HepG2 (cell line): ENCODE measurements at regions of chr20 and their contacts with region 1.

Region 1: GRCh38 chr20:49006446-49006980 is 39.6 kb upstream of the CSE1L start:
- DNase-seq: no peak
- ATAC-seq: no peak
- H3K4me3 ChIP-seq: no peak overlapping the region
- H3K27ac ChIP-seq: peak overlapping the region; percentile 16
- H3K4me1 ChIP-seq: peaks cover 46% of the 10 kb centered on the region
- H3K27me3 ChIP-seq: no peaks in the 10 kb centered on the region
- CTCF ChIP-seq: no peak
- EP300 ChIP-seq: no peak
- POLR2A ChIP-seq: no peak
- RAD21 ChIP-seq: no peak

Region 2: GRCh38 chr20:49028684-49029083 is 22.2 kb after region 1 on chr20:
- CTCF ChIA-PET with region 1: no interaction called
- POLR2A ChIA-PET with region 1: no interaction called
- in situ Hi-C with region 1: no loop called
- intact Hi-C with region 1: no loop called
- DNase-seq: peak; percentile 58
- ATAC-seq: peak; percentile 84
- H3K4me3 ChIP-seq: no peak overlapping the region
- H3K27ac ChIP-seq: no peak overlapping the region
- H3K4me1 ChIP-seq: no peaks in the 10 kb centered on the region
- H3K27me3 ChIP-seq: no peaks in the 10 kb centered on the region
- CTCF ChIP-seq: peak; percentile 58
- EP300 ChIP-seq: no peak
- POLR2A ChIP-seq: no peak
- RAD21 ChIP-seq: peak; percentile 29; the same call in 1 of the 2 replicates

Region 3: GRCh38 chr20:49046087-49046900 is 39.8 kb after region 1 on chr20 and contains the start of gene CSE1L:
- CTCF ChIA-PET with region 1: no interaction called
- POLR2A ChIA-PET with region 1: interaction called, 15 read pairs
- in situ Hi-C with region 1: no loop called
- intact Hi-C with region 1: loop called (anchors 5 kb)
- DNase-seq: peak; percentile 97
- ATAC-seq: peak; percentile 97
- H3K4me3 ChIP-seq: peak within 1 kb of the TSS; percentile 84 to 99 (median 87)
- H3K27ac ChIP-seq: peak within 1 kb of the TSS; percentile 89
- H3K4me1 ChIP-seq: peaks cover 50% of the 10 kb centered on the region
- H3K27me3 ChIP-seq: no peaks in the 10 kb centered on the region; a peak in 2 of 5 replicates
- CTCF ChIP-seq: no peak
- EP300 ChIP-seq: peak in 1 of 2 experiments; percentile 20; a peak in 2 of 4 replicates
- POLR2A ChIP-seq: peak; percentile 93 to 96
- RAD21 ChIP-seq: peak; percentile 56
- total RNA-seq, gene CSE1L: 258 and 449 TPM in 2 replicates

Region 4: DNA sequence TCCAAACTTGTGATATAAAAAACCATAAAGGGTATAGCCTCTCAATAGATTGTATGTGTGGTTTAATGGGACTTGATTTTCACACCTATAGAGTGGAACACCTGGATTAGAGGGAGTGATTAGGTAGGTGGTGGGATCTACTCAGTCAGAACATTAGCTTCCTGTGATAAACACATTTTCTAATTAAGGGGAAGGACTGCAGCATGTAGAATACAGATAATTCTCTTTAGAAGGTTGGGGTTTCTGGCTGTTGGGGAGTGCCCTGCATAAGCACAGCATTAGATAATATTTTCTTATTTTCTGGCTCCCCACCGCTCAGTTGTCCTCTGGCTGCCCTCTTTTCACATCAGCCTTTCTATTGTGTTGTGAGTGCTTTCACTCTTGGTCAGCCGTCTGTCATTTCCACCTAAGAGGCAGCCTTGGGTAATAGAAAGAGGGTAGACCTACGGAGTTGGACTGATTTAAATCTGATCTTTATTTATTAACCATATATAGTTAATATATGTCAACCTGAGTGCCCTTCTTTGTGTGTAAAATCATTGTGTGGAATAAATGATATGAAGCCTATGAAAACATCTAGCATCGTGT is 47.6 kb after region 1 on chr20:
- CTCF ChIA-PET with region 1: no interaction called
- POLR2A ChIA-PET with region 1: no interaction called
- in situ Hi-C with region 1: no loop called
- intact Hi-C with region 1: loop called (anchors 5 kb)
- DNase-seq: no peak
- ATAC-seq: no peak
- H3K4me3 ChIP-seq: no peak overlapping the region
- H3K27ac ChIP-seq: peak overlapping the region; percentile 13
- H3K4me1 ChIP-seq: peaks cover 70% of the 10 kb centered on the region
- H3K27me3 ChIP-seq: no peaks in the 10 kb centered on the region
- CTCF ChIP-seq: no peak
- EP300 ChIP-seq: no peak
- POLR2A ChIP-seq: no peak
- RAD21 ChIP-seq: no peak